ENCODE measurements at regions of chr2 and their contacts with region 1.

Region 1: DNA sequence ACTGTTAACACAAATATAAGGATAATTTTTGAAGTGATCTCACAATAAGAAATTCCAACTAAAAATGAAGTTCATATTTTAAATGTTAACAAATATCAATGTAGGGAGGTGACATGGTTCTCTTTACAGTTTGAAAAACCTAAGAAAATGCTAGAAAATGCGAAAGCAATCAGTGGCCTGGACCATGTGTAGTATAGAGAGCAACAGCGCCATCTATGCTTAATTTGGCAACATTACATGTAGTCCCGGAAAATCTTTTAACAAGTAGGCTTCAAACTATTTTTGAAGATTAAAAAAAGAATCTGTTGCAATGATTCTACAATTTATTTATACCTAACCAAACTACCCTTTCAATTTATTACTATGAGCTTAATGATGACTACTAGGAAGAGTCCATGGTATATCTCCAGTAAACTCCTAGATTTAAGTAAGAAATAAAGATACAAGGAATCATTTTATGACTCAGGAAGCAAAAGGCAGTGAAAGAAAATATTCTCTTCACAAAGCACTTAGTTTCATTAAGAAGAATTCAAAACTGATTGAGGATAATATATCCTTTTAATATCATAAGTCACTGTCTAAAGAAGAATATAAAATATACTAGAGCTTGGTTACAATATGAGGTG is 33.3 kb downstream of the NDUFA10 start:
- DNase-seq: no peak
- H3K4me3 ChIP-seq: no peak overlapping the region
- H3K27ac ChIP-seq: no peak overlapping the region
- H3K4me1 ChIP-seq: no peaks in the 10 kb centered on the region
- H3K27me3 ChIP-seq: no peaks in the 10 kb centered on the region
- CTCF ChIP-seq: peak in 2 of 3 experiments; percentile 49 to 70; a peak in 3 of 4 replicates
- EP300 ChIP-seq: no peak
- POLR2A ChIP-seq: no peak
- RAD21 ChIP-seq: peak; percentile 70 to 73

Region 2: GRCh38 chr2:239846789-239847676 is 144.8 kb before region 1 on chr2:
- CTCF ChIA-PET with region 1: no interaction called
- POLR2A ChIA-PET with region 1: no interaction called
- DNase-seq: no peak
- H3K4me3 ChIP-seq: no peak overlapping the region
- H3K27ac ChIP-seq: no peak overlapping the region
- H3K4me1 ChIP-seq: no peaks in the 10 kb centered on the region
- H3K27me3 ChIP-seq: no peaks in the 10 kb centered on the region
- CTCF ChIP-seq: no peak
- EP300 ChIP-seq: no peak
- POLR2A ChIP-seq: no peak
- RAD21 ChIP-seq: no peak

Region 3: GRCh38 chr2:239979243-239980023 is 12.4 kb before region 1 on chr2:
- CTCF ChIA-PET with region 1: interaction called, 16 read pairs
- POLR2A ChIA-PET with region 1: no interaction called
- DNase-seq: peak; percentile 19 to 68
- H3K4me3 ChIP-seq: no peak overlapping the region
- H3K27ac ChIP-seq: no peak overlapping the region; the same call in 1 of the 2 replicates
- H3K4me1 ChIP-seq: no peaks in the 10 kb centered on the region; a peak in 1 of 7 replicates
- H3K27me3 ChIP-seq: no peaks in the 10 kb centered on the region
- CTCF ChIP-seq: peak; percentile 71 to 97 (median 80)
- EP300 ChIP-seq: no peak
- POLR2A ChIP-seq: no peak
- RAD21 ChIP-seq: peak; percentile 68 to 73

Region 4: GRCh38 chr2:240013343-240013742 is 21.5 kb after region 1 on chr2:
- CTCF ChIA-PET with region 1: interaction called, 10 read pairs
- POLR2A ChIA-PET with region 1: interaction called, 3 read pairs
- DNase-seq: no peak
- H3K4me3 ChIP-seq: no peak overlapping the region
- H3K27ac ChIP-seq: no peak overlapping the region
- H3K4me1 ChIP-seq: no peaks in the 10 kb centered on the region
- H3K27me3 ChIP-seq: no peaks in the 10 kb centered on the region
- CTCF ChIP-seq: no peak
- EP300 ChIP-seq: no peak
- POLR2A ChIP-seq: no peak
- RAD21 ChIP-seq: no peak

Region 5: GRCh38 chr2:240021488-240022104 is 29.8 kb after region 1 on chr2:
- CTCF ChIA-PET with region 1: interaction called, 50 read pairs
- POLR2A ChIA-PET with region 1: interaction called, 4 read pairs
- DNase-seq: peak; percentile 69 to 90
- H3K4me3 ChIP-seq: no peak overlapping the region; a peak in 1 of 8 replicates
- H3K27ac ChIP-seq: no peak overlapping the region
- H3K4me1 ChIP-seq: 0 out of 7 replicates have a peak, but pooled peaks cover 0 to 6% (median 0%) of the 10 kb centered on the region in 4 experiments
- H3K27me3 ChIP-seq: no peaks in the 10 kb centered on the region
- CTCF ChIP-seq: peak; percentile 83 to 98 (median 90)
- EP300 ChIP-seq: no peak
- POLR2A ChIP-seq: no peak
- RAD21 ChIP-seq: peak; percentile 46 to 61; a peak in 3 of 4 replicates

Region 6: DNA sequence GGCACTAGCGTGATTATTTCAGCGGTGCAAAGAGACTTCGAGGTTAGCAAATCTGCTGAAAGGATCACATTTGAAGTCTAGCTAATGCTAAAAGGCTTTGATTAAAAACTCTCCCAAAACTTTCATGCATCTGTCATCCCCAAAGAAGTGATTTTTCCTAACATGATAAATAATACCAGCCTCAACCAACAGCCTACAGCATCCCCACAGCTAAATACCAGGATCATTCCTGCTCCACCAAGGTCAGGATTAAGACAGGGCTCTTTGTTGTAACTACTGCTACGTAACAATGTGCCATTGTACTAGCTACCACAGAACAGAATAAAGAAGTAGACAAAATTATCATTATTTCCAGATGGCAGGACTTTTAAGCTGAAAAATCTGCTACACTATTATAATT is 59.9 kb after region 1 on chr2:
- CTCF ChIA-PET with region 1: no interaction called
- POLR2A ChIA-PET with region 1: no interaction called
- DNase-seq: no peak
- H3K4me3 ChIP-seq: no peak overlapping the region
- H3K27ac ChIP-seq: no peak overlapping the region
- H3K4me1 ChIP-seq: no peaks in the 10 kb centered on the region
- H3K27me3 ChIP-seq: 0 out of 7 replicates have a peak, but pooled peaks cover 0 to 2% (median 0%) of the 10 kb centered on the region in 4 experiments
- CTCF ChIP-seq: no peak
- EP300 ChIP-seq: no peak
- POLR2A ChIP-seq: no peak
- RAD21 ChIP-seq: no peak

Measured in H1 (cell line).